ENCODE measurements at regions of chr2 and their contacts with region 1.

Region 1: GRCh38 chr2:230793572-230794359 is 71.0 kb upstream of the ITM2C start:
- DNase-seq: peak; percentile 87
- H3K4me3 Mint-ChIP-seq: peak overlapping the region; percentile 62
- H3K27ac Mint-ChIP-seq: no peak overlapping the region
- H3K4me1 Mint-ChIP-seq: peaks cover 55% of the 10 kb centered on the region
- H3K27me3 Mint-ChIP-seq: no peaks in the 10 kb centered on the region

Region 2: DNA sequence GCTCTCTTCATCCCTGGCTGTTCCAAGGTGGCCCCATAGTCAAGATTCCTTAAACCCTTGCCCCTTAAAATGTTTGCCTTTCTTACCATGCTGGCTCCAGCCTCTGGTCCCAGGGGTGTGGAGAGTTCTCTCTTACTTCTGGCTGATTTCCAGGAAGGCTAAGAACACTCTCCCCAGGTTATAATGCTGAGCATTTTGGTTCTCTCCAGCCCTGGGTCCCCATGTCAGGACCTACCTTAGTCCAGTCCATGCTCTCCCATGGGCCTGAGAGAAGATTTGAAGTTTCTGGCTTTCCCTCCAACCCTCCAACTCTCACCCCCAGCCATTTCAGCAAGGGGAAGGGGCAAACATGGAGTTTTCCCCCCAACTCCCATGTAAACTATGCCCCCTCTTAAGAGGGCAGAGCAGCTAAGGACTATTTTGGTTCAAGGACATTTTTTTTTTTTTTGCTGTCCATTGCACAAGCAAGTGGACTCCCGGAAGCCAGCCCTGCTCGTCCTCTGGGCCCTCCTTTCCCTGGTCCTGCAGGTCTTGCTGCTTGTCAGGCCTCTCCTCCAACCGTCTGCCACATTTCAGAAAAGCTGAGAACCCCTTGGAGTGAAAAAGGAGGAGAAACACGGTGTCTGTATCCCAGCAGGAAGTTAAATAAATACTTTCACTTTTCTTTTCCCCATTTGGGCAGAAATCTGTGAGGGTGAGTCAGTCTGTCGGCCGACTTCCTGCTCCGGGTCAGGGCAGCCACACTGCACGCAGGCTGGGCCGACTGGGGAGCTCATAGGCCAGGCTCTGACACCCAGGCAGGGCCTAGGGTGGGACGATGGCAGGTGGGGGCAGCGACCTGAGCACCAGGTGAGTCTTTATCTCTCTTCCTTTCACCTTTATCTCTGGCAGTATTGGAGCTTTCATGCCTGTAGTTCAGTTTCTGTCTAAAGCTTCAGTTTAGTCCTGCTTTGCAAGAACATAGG is 467.0 kb before region 1 on chr2 and contains the start of gene SP140L:
- CTCF ChIA-PET with region 1: no interaction called
- POLR2A ChIA-PET with region 1: no interaction called
- intact Hi-C with region 1: loop called (anchors 5 kb)
- DNase-seq: peak; percentile 87
- H3K4me3 Mint-ChIP-seq: peak within 1 kb of the TSS; percentile 88
- H3K27ac Mint-ChIP-seq: peak within 1 kb of the TSS; percentile 94
- H3K4me1 Mint-ChIP-seq: peaks cover 56% of the 10 kb centered on the region
- H3K27me3 Mint-ChIP-seq: no peaks in the 10 kb centered on the region
- total RNA-seq, gene SP140L: 41.9 to 44.1 TPM

Region 3: DNA sequence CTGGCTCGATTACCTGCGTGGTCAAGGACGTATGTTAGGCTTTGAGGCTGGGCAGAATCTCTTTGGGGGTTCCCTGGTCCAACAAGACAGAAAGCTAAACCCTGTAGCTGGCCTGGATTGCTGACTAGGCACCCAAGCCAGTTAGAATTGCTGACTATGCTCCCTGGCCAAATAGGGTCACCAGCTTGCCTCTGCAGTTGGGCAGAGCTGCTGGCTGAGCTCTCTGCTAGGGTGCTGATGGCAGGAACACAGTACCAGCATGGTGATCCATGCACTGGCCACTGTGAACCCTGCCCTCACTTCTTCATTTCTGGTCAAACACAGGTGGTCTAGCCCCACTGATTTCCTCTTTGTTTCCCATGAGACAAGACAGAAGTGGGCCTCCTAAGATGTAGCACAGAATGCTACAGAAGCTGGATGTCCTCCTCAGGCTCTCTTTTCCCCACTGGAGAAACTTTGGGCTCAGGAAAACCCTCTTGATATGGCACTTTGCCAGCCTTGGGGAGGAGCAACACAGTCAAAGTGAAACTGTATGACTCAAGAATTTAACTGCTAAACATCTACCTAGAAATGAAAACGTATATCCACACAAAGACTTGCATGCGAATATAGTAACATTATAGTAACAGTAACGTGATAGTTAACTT is 446.0 kb before region 1 on chr2:
- CTCF ChIA-PET with region 1: no interaction called
- POLR2A ChIA-PET with region 1: no interaction called
- intact Hi-C with region 1: loop called (anchors 5 kb)
- DNase-seq: peak; percentile 70
- H3K4me3 Mint-ChIP-seq: peak overlapping the region; percentile 47
- H3K27ac Mint-ChIP-seq: peak overlapping the region; percentile 92
- H3K4me1 Mint-ChIP-seq: peaks cover 80% of the 10 kb centered on the region
- H3K27me3 Mint-ChIP-seq: no peaks in the 10 kb centered on the region

Region 4: DNA sequence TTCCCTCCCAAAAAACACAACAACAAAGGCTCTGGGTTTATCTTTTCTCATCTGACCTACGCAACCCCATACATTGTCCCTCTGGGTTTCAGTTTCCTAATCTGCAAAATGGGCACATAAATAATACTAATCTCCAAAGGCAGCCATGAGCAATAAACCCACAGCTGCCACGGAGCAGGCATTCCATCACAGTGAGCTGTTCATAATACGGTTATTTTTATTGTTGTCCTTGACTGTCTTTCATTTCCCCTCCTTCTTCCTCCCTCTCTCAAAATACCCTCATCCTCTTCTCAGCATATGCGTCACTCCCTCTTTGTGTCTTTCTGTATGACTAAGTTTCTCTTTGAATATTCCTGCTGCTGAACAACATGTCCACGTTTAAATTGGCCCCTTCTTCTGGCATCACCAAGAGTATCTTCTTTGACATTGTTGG is 210.9 kb before region 1 on chr2:
- CTCF ChIA-PET with region 1: no interaction called
- POLR2A ChIA-PET with region 1: no interaction called
- intact Hi-C with region 1: loop called (anchors 5 kb)
- DNase-seq: peak; percentile 69
- H3K4me3 Mint-ChIP-seq: no peak overlapping the region
- H3K27ac Mint-ChIP-seq: peak overlapping the region; percentile 79
- H3K4me1 Mint-ChIP-seq: peaks cover 24% of the 10 kb centered on the region
- H3K27me3 Mint-ChIP-seq: no peaks in the 10 kb centered on the region

Region 5: GRCh38 chr2:230712443-230713330 is 81.1 kb before region 1 on chr2 and contains the start of gene CAB39:
- CTCF ChIA-PET with region 1: interaction called, 76 read pairs
- POLR2A ChIA-PET with region 1: interaction called, 22 read pairs
- intact Hi-C with region 1: loop called (anchors 1 kb)
- DNase-seq: peak; percentile 91
- H3K4me3 Mint-ChIP-seq: peak within 1 kb of the TSS; percentile 93
- H3K27ac Mint-ChIP-seq: peak within 1 kb of the TSS; percentile 91
- H3K4me1 Mint-ChIP-seq: peaks cover 41% of the 10 kb centered on the region
- H3K27me3 Mint-ChIP-seq: no peaks in the 10 kb centered on the region
- total RNA-seq, gene CAB39: 128 to 129 TPM

Region 6: DNA sequence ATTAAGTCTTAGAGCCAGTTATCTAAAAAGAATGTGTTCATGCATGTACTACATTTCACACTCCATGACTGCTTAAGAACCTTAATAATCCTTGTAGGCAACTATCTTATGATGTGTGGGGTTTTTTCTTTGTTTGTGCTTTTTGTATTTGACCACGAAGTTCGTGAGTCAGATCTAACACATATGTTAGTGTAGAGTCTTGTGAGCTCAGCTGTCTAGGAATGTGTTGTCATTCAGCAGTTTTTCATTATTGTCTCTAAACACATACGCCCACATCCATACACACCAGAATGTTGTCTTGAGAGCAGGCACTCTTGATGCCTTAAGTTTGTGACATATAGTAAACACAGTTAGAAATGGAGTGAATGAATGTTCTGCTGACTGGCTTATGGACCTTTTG is 42.7 kb before region 1 on chr2:
- CTCF ChIA-PET with region 1: interaction called, 4 read pairs
- POLR2A ChIA-PET with region 1: interaction called, 4 read pairs
- intact Hi-C with region 1: loop called (anchors 1 kb)
- DNase-seq: no peak
- H3K4me3 Mint-ChIP-seq: no peak overlapping the region
- H3K27ac Mint-ChIP-seq: peak overlapping the region; percentile 76
- H3K4me1 Mint-ChIP-seq: peaks cover 76% of the 10 kb centered on the region
- H3K27me3 Mint-ChIP-seq: no peaks in the 10 kb centered on the region

Region 7: GRCh38 chr2:230781130-230781797 is 12.5 kb before region 1 on chr2:
- CTCF ChIA-PET with region 1: interaction called, 9 read pairs
- POLR2A ChIA-PET with region 1: interaction called, 20 read pairs
- intact Hi-C with region 1: loop called (anchors 1 kb)
- DNase-seq: peak; percentile 74
- H3K4me3 Mint-ChIP-seq: peak overlapping the region; percentile 2
- H3K27ac Mint-ChIP-seq: peak overlapping the region; percentile 84
- H3K4me1 Mint-ChIP-seq: peaks cover 80% of the 10 kb centered on the region
- H3K27me3 Mint-ChIP-seq: no peaks in the 10 kb centered on the region